Activated naive CD4-positive, alpha-beta T cell treated with anti-CD3 and anti-CD28 coated beads for 36 hours (primary cell): ENCODE measurements at regions of chr4 and their contacts with region 1.

Region 1: GRCh38 chr4:142585411-142585810 is 260.7 kb downstream of the INPP4B start:
- DNase-seq: no peak
- H3K4me3 Mint-ChIP-seq: no peak overlapping the region
- H3K27ac Mint-ChIP-seq: peak overlapping the region; percentile 4
- H3K4me1 Mint-ChIP-seq: peaks cover 68% of the 10 kb centered on the region
- H3K27me3 Mint-ChIP-seq: no peaks in the 10 kb centered on the region

Region 2: DNA sequence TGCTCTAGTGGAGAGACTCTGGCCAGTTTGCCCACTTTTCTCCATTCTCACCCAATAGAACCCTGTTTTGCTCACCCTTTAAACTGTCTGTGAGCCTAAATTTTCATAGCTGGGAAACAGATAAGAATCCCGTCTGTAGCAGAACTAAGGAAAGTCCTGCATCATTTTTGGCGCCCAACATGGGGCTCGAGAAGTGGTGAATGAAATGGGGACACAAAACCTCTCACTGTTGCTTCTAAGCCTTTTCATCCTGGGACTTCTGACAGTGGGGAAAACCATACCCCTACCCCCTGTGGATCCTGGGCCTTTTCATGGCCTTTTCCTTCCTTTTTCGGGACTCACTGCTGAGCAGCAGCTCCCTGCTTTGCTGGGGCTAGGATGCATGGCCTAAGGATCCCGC is 70.8 kb after region 1 on chr4:
- CTCF ChIA-PET with region 1: no interaction called
- intact Hi-C with region 1: loop called (anchors 5 kb)
- DNase-seq: peak; percentile 33
- H3K4me3 Mint-ChIP-seq: no peak overlapping the region
- H3K27ac Mint-ChIP-seq: no peak overlapping the region
- H3K4me1 Mint-ChIP-seq: no peaks in the 10 kb centered on the region
- H3K27me3 Mint-ChIP-seq: no peaks in the 10 kb centered on the region